ENCODE measurements at regions of chr11 and their contacts with region 1.

Region 1: GRCh38 chr11:86099874-86100273 is 31.0 kb upstream of the PICALM start:
- DNase-seq: no peak
- H3K4me3 ChIP-seq: no peak overlapping the region
- H3K27ac ChIP-seq: no peak overlapping the region
- H3K27me3 ChIP-seq: no peaks in the 10 kb centered on the region
- CTCF ChIP-seq: no peak

Region 2: DNA sequence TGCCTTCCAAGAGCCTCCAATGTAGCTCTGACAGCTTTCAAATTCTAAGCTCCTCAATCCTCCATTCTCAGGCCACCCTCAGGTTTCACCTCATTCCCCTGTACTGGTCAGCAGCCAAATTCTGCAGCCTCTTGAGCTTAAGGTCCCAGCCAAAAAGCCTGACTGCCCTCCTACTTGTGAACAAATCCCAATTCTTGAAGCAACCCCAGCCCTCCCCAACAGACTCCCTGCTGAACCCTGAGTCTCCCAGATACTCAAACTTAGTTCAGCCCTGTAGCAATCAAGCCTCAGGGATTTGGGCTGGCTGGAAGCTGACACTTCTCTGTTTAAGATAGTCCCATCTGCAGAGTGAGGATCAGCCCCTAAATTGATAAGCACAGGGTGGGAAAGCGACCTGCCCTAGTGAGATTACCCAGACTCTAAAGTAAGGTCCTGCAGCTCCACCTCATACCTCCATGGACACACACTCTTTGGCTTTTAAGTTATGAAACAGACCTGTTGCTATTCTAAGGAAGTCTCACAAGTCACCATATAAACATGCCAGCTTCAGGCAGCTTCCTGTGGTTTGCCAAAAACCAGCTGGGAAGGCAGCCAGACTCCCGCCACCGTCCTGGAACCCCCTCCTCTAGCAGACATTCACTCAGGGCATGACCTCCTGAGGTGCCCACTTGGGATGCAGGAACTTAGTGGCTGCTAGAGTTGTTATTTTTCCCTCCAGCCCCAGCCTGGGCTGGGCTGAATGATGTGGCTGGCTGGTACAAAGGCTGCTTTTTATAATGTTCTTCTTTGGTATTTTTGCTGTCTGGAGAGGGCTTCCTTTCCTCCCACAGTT is 51.5 kb after region 1 on chr11:
- intact Hi-C with region 1: loop called in 1 of 2 experiments (anchors 5 kb)
- DNase-seq: peak in 9 of 10 donors; percentile 32 to 66 (median 52)
- H3K4me3 ChIP-seq: peak overlapping the region in 33 of 59 donors; percentile 1 to 50 (median 27)
- H3K27ac ChIP-seq: peak overlapping the region; percentile 46 to 98 (median 96)
- H3K27me3 ChIP-seq: no peaks in the 10 kb centered on the region
- CTCF ChIP-seq: no peak

Measured in dorsolateral prefrontal cortex (tissue), 120 donors.